ENCODE measurements at regions of chr3 and their contacts with region 1.

Region 1: DNA sequence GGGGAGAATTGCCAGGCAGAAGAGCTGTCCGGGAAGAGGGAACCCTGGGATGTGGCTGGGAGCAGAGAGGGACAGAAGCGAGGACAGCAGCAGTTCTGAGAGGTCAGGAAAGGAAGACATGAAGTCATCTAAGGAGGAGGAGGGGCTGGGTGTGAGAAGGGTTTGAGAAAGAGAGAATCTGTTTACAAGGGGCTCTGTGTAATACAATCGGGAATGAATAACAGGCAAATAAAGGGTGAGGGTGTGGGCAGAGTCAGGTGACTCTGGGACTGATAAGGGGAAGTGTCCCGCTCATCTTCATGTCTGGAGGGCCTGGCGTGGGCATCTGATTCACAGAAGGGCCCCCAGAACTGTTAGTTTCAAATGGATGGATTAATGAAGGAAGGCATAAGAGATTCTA is 191.3 kb downstream of the XXYLT1 start:
- DNase-seq: no peak
- H3K4me3 Mint-ChIP-seq: no peak overlapping the region
- H3K27ac Mint-ChIP-seq: peak overlapping the region; percentile 19
- H3K4me1 Mint-ChIP-seq: no peaks in the 10 kb centered on the region
- H3K27me3 Mint-ChIP-seq: no peaks in the 10 kb centered on the region

Region 2: GRCh38 chr3:194034556-194035336 is 1044.9 kb before region 1 on chr3:
- CTCF ChIA-PET with region 1: no interaction called
- POLR2A ChIA-PET with region 1: interaction called, 12 read pairs
- DNase-seq: no peak
- H3K4me3 Mint-ChIP-seq: no peak overlapping the region
- H3K27ac Mint-ChIP-seq: no peak overlapping the region
- H3K4me1 Mint-ChIP-seq: peaks cover 3% of the 10 kb centered on the region
- H3K27me3 Mint-ChIP-seq: peaks cover 3% of the 10 kb centered on the region